ENCODE measurements at regions of chr9 and their contacts with region 1.

Region 1: DNA sequence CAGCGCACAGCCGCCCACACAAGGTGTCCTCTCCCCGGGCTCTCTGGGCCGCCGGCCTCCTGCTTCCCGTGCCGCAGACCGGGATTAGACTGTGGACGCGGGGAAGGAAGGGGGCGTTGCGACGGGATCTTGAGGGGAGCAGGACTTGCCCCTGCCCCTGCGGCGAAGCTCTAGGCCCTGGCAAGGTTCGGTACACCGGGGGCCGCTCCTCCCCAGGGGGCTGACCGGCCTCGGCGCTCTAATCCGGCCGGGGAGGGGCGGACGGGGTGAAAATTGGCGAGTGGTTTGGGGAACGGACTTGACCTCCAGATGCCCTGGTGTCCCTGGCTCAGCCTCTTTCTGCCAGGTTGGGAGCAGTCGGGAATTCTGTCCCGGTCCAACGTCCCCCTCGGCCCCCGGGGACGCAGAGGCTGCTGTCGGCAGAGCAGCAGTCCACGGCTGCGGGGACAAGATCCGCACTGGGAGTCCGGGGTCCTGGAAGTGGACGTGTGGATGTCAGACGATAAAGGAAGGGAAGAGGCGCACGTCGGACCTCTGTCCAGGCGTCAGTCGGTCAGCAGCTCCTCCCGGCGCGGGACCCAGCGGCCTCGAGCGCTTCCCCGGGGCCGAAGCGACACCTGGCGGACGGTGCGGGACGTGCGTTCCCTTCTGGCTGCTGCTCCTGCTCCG is 1.9 kb upstream of the CNTFR start:
- H3K4me3 ChIP-seq: no peak overlapping the region
- H3K27ac ChIP-seq: no peak overlapping the region
- H3K4me1 ChIP-seq: no peaks in the 10 kb centered on the region
- CTCF ChIP-seq: peak; percentile 90

Region 2: DNA sequence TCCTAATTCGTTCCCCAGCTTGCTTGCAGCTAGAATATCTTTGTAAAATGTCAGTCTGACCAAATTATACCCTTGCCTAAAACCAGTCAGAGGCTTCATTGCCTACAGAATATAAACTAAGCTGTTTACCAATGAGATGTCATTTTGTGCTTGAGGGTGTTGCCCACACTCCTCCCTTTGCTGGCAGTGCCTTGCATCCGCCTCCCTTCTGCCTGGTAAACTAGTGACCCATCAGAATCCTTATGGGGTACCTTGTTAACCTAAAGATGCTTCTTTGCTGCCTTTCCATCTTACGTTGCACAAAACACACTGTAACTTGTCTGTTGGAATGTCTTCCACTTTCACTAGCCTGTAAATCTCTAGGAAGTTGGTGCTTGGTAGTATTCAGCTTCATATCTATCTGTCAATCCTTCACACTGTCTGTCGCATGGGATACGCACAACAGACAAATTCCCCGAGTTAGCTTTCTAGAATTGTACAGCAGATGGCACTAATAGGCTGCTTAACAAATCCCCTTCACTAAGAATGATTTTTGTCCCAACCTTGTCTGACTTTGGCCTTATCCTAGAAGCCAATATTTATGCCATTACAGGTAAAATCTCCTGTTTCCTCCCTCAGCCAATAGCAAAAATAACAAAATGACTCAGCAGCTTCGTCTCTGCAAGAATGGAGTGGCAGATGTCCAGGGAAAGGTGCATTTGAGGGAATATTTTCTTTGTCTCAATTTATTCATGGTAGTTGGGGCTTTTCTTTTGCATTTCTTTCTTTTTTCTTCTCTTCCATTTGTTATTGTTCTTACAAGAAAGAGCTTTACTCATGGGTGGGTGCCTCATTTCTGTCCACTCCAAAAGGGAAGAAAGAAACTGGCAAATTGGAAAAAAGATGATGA is 259.1 kb before region 1 on chr9:
- CTCF ChIA-PET with region 1: interaction called, 16 read pairs
- POLR2A ChIA-PET with region 1: no interaction called
- H3K4me3 ChIP-seq: no peak overlapping the region
- H3K27ac ChIP-seq: no peak overlapping the region
- H3K4me1 ChIP-seq: no peaks in the 10 kb centered on the region
- CTCF ChIP-seq: peak; percentile 48; the same call in 1 of the 2 replicates

Region 3: GRCh38 chr9:34437006-34437925 is 154.1 kb before region 1 on chr9:
- CTCF ChIA-PET with region 1: interaction called, 16 read pairs
- POLR2A ChIA-PET with region 1: no interaction called
- H3K4me3 ChIP-seq: no peak overlapping the region
- H3K27ac ChIP-seq: no peak overlapping the region
- H3K4me1 ChIP-seq: no peaks in the 10 kb centered on the region
- CTCF ChIP-seq: 0 out of 2 replicates have a peak, but pooled peaks have one; percentile 14

Region 4: DNA sequence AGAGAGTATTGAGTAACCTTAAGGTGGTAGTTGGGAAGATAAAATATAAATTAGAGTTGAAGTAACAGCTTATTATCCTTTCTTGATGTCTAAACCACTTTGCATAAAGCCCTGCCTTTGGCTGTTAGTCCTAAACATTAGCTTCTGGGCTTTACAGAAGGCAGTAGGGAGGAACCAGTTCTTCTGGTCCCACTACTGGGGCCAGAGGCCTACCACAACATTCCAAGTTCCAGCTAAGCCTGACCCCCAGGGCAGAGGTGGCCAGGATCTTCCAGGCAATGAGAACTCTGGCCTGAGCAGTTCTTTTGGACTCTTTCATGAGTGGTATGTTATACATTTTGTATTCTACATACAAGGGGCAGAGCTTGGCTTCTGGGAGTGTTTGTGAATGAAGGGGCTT is 106.7 kb before region 1 on chr9:
- CTCF ChIA-PET with region 1: no interaction called
- POLR2A ChIA-PET with region 1: no interaction called
- H3K4me3 ChIP-seq: no peak overlapping the region
- H3K27ac ChIP-seq: no peak overlapping the region
- H3K4me1 ChIP-seq: no peaks in the 10 kb centered on the region
- CTCF ChIP-seq: no peak

Region 5: GRCh38 chr9:34522971-34523797 is 68.2 kb before region 1 on chr9 and contains the start of gene ENHO:
- CTCF ChIA-PET with region 1: interaction called, 12 read pairs
- POLR2A ChIA-PET with region 1: no interaction called
- H3K4me3 ChIP-seq: peak within 1 kb of the TSS; percentile 37
- H3K27ac ChIP-seq: no peak within 1 kb of the TSS
- H3K4me1 ChIP-seq: no peaks in the 10 kb centered on the region
- CTCF ChIP-seq: no peak

Region 6: DNA sequence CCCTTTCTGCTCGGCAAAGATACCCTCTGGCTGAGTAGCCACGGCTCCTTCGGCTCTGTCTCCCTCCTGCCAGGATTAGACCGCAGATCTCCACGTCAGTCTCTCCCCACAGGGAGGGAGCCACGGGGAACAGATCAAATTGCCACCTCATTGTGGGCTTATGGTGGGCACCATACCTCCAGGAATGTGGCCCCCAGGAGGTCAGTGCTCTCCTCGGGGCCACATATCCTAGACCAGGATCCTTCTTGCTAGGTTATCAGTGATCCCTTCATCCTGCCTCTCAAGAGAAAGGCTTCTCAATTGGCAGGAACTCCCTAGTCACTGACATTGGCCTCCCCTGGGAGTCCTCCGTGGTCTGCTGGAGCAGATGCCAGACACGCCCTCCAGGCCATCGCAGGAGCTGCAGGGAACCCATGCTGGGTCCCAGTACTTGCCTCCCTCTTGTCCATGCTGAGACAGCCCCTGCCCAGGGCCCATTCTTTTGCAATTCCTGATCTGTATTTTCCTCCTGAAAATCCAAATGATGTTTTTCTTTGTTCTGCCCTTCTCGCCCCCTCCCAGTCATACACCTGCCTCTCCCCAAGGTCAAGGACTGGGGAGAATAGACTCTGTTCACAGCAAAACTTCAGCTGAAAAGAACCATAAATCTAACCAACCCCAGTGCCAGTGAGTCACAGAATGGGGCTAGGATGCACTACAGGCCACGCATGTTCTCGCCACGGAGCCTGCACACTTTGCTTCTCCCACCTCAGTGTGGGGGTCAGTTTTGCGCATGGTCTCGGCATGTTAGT is 37.0 kb before region 1 on chr9:
- CTCF ChIA-PET with region 1: interaction called, 49 read pairs
- POLR2A ChIA-PET with region 1: no interaction called
- H3K4me3 ChIP-seq: no peak overlapping the region
- H3K27ac ChIP-seq: no peak overlapping the region
- H3K4me1 ChIP-seq: peaks cover 3% of the 10 kb centered on the region; the same call in 1 of the 2 replicates
- CTCF ChIP-seq: no peak

Region 7: GRCh38 chr9:34570376-34570775 is 21.0 kb before region 1 on chr9:
- CTCF ChIA-PET with region 1: interaction called, 26 read pairs
- POLR2A ChIA-PET with region 1: no interaction called
- H3K4me3 ChIP-seq: no peak overlapping the region
- H3K27ac ChIP-seq: no peak overlapping the region
- H3K4me1 ChIP-seq: no peaks in the 10 kb centered on the region
- CTCF ChIP-seq: no peak

Region 8: GRCh38 chr9:34603610-34604231 is 12.3 kb after region 1 on chr9:
- CTCF ChIA-PET with region 1: interaction called, 105 read pairs
- POLR2A ChIA-PET with region 1: interaction called, 3 read pairs
- H3K4me3 ChIP-seq: no peak overlapping the region
- H3K27ac ChIP-seq: no peak overlapping the region
- H3K4me1 ChIP-seq: no peaks in the 10 kb centered on the region
- CTCF ChIP-seq: peak; percentile 77

Region 9: GRCh38 chr9:34644766-34645314 is 53.5 kb after region 1 on chr9:
- CTCF ChIA-PET with region 1: no interaction called
- POLR2A ChIA-PET with region 1: no interaction called
- H3K4me3 ChIP-seq: no peak overlapping the region
- H3K27ac ChIP-seq: no peak overlapping the region
- H3K4me1 ChIP-seq: no peaks in the 10 kb centered on the region; the same call in 1 of the 2 replicates
- CTCF ChIP-seq: no peak

Region 10: DNA sequence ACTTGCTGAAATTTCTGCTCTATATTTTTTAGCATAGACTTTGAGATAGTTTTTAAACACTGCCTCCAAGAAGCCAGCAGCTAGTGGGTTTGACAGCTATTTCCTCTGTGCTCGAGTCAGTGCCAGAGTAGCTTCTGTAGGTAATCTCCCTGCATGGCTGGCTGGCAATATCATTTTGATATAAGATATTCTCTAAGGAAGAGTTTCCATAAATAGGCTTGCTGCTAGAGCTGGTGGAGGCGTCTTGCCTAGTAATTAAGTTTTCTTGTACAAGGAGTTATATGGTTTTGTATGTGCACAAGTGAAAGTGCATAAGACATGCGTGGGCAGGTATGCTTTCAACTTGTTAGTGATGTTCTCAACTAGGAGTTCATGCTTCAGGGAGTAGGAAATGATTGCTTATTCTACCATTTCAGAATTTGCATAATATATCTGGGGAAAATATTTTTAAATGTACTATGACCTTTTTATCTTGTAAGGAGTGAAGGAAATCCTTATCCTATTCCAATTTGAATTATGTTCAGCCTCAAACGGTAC is 192.6 kb after region 1 on chr9:
- CTCF ChIA-PET with region 1: no interaction called
- POLR2A ChIA-PET with region 1: no interaction called
- H3K4me3 ChIP-seq: no peak overlapping the region
- H3K27ac ChIP-seq: no peak overlapping the region
- H3K4me1 ChIP-seq: no peaks in the 10 kb centered on the region
- CTCF ChIP-seq: no peak

Measured in HEK293 (cell line).